HEK293 (cell line): ENCODE measurements at regions of chr4 and their contacts with region 1.

Region 1: DNA sequence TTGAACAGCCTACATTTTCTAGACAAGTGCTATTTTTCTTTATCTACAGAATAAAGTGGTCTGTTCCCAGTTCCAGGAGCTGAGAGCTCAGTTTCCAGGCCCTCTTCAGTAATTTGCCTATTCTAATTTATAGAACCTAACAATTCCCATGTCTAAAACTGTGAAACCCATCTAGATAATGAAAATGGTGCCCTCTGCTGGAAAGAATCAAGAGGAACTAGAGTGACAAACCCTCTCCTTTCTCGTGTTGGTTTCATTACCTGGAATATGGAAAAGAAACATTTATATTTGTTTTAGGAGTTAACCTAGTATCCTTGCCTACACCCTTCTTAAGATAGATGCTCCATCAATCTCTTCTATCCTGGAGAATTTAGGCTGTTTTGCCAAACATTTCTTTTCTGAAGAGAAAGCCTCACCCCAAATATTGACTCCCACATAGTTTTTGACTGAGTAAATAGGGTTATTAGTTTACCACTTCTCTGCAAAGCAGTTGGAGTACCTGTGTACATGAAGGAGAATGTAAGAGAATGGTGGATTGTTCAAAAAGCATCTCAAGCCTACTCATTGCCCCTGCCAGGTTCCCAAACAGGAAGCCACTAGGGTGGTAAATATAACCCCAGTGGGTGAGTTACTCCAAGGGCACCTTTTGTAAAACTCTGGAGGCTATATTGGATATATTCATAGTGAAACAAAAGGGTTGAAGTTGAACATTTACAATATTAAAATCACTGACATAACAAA is 121.6 kb downstream of the RASL11B start:
- H3K4me3 ChIP-seq: no peak overlapping the region
- H3K27ac ChIP-seq: no peak overlapping the region
- H3K4me1 ChIP-seq: 0 out of 2 replicates have a peak, but pooled peaks cover 2% of the 10 kb centered on the region
- CTCF ChIP-seq: no peak

Region 2: DNA sequence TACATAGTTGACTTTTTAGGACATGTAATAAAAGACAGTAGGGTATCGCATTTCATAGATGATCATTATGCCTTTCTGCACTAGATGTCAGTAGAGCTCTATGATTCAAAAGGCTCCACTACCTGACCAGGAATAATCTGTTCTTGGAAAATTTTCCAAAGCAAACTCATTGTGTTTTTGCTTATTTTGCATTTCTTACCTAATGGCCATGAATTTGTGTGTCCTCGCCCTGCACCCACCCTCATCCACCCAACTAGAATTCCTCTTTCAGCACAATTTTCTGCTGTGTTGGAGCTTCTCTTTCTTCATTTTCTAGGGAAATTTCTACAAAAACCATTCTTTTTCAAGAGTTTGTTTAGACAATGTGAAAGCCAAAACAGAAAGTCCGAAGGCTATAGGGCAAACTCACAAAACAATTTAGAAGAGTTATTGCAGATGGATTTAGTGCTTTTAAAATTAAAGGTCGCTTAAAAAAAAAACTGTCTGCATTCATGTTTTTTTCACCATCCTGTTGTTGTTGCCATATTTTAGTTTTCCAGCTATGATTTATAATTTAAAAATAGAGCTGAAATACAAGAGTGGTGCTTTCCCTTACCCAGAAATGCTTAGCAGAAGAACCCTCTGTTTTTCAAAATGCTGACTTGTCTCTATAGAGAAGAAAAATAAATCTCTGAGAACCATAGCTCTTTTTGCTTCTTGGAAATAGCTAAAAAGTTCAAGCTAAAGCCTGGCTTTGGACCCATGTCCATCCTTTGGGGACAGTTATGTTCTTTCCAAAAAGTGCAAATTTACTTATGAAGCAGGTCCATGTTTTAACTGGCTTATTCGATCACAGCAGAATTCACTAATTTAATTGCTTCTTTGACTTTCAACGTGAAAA is 748.9 kb before region 1 on chr4:
- CTCF ChIA-PET with region 1: interaction called, 10 read pairs
- POLR2A ChIA-PET with region 1: no interaction called
- H3K4me3 ChIP-seq: no peak overlapping the region
- H3K27ac ChIP-seq: no peak overlapping the region
- H3K4me1 ChIP-seq: no peaks in the 10 kb centered on the region
- CTCF ChIP-seq: peak; percentile 48; the same call in 1 of the 2 replicates

Region 3: GRCh38 chr4:52545099-52546069 is 438.3 kb before region 1 on chr4:
- CTCF ChIA-PET with region 1: interaction called, 77 read pairs
- POLR2A ChIA-PET with region 1: no interaction called
- H3K4me3 ChIP-seq: no peak overlapping the region
- H3K27ac ChIP-seq: no peak overlapping the region
- H3K4me1 ChIP-seq: no peaks in the 10 kb centered on the region
- CTCF ChIP-seq: peak; percentile 48

Region 4: GRCh38 chr4:54233277-54233696 is 1249.6 kb after region 1 on chr4:
- CTCF ChIA-PET with region 1: interaction called, 19 read pairs
- POLR2A ChIA-PET with region 1: no interaction called
- H3K4me3 ChIP-seq: peak overlapping the region; percentile 56
- H3K27ac ChIP-seq: peak overlapping the region; percentile 82; the same call in 1 of the 2 replicates
- H3K4me1 ChIP-seq: 0 out of 2 replicates have a peak, but pooled peaks cover 2% of the 10 kb centered on the region
- CTCF ChIP-seq: peak; percentile 83